H1 (cell line): ENCODE measurements at regions of chr9 and their contacts with region 1.

Region 1: GRCh38 chr9:101299901-101300300 is 84.9 kb downstream of the BAAT start:
- DNase-seq: no peak
- H3K4me3 ChIP-seq: no peak overlapping the region
- H3K27ac ChIP-seq: no peak overlapping the region
- H3K4me1 ChIP-seq: peaks cover 0 to 3% (median 1%) of the 10 kb centered on the region in 4 experiments; a peak in 1 of 7 replicates
- H3K27me3 ChIP-seq: no peaks in the 10 kb centered on the region
- CTCF ChIP-seq: no peak
- EP300 ChIP-seq: no peak
- POLR2A ChIP-seq: no peak
- RAD21 ChIP-seq: no peak

Region 2: GRCh38 chr9:101311758-101312420 is 12.0 kb after region 1 on chr9:
- CTCF ChIA-PET with region 1: interaction called, 19 read pairs
- POLR2A ChIA-PET with region 1: no interaction called
- DNase-seq: no peak
- H3K4me3 ChIP-seq: no peak overlapping the region
- H3K27ac ChIP-seq: no peak overlapping the region
- H3K4me1 ChIP-seq: no peaks in the 10 kb centered on the region
- H3K27me3 ChIP-seq: no peaks in the 10 kb centered on the region
- CTCF ChIP-seq: peak in 2 of 3 experiments; percentile 53 to 65; a peak in 2 of 4 replicates
- EP300 ChIP-seq: no peak
- POLR2A ChIP-seq: no peak
- RAD21 ChIP-seq: peak; percentile 80 to 83

Region 3: GRCh38 chr9:101398068-101398929 is 98.4 kb after region 1 on chr9 and contains the starts of genes MRPL50 and ZNF189:
- CTCF ChIA-PET with region 1: no interaction called
- POLR2A ChIA-PET with region 1: no interaction called
- DNase-seq: peak; percentile 89 to 94
- H3K4me3 ChIP-seq: peak within 1 kb of the TSS; percentile 84 to 93 (median 87)
- H3K27ac ChIP-seq: peak within 1 kb of the TSS; percentile 89
- H3K4me1 ChIP-seq: peaks cover 0 to 4% (median 3%) of the 10 kb centered on the region in 4 experiments; a peak in 3 of 7 replicates
- H3K27me3 ChIP-seq: no peaks in the 10 kb centered on the region
- CTCF ChIP-seq: no peak
- EP300 ChIP-seq: no peak
- POLR2A ChIP-seq: peak; percentile 97 to 98
- RAD21 ChIP-seq: no peak
- total RNA-seq, gene MRPL50: 24.0 and 25.1 TPM in 2 replicates
- total RNA-seq, gene ZNF189: 11.9 and 12.3 TPM in 2 replicates